ENCODE measurements at regions of chr20 and their contacts with region 1.

Region 1: DNA sequence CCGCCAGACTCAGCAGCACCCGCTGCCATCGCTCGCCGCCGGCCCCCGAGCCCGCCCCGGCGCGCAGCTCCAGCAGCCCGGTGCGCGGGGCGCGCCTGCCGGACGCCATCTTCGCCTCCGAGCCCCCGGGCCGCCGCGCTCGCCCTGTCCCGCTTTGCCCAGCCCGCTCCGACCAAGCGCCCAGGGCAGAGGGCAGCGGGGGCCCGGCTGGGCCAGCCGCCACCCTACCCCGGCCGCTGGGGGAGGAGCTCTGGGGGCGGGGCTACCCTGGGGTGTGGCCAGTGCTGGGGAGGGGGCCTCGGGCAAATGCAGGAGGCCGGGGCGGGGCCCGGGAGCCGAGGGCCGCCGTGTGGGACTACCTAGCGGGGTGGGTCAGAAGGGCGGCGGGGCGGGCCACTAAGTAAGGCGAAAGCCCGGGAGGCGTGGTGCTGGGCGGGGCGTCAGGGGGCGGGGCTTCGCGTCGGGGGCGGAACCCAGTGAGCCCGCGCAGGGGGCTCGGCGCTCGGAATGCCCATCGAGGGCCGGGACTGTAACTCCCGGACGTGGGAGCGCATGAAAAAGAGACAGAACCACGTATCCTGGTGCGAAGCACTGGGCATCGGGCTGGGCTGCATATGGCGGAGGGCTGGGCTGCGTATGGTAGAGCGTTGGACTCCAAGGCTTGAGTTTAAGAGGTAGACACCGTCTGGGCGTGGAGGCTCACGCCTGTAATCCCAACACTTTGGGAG is at the start of gene SNTA1:
- DNase-seq: no peak
- ATAC-seq: peak; percentile 96
- H3K4me3 ChIP-seq: peak within 1 kb of the TSS; percentile 43 to 70
- H3K27ac ChIP-seq: no peak within 1 kb of the TSS
- H3K4me1 ChIP-seq: no peaks in the 10 kb centered on the region
- H3K27me3 ChIP-seq: no peaks in the 10 kb centered on the region
- CTCF ChIP-seq: no peak
- total RNA-seq, gene SNTA1: 12.0 TPM

Region 2: DNA sequence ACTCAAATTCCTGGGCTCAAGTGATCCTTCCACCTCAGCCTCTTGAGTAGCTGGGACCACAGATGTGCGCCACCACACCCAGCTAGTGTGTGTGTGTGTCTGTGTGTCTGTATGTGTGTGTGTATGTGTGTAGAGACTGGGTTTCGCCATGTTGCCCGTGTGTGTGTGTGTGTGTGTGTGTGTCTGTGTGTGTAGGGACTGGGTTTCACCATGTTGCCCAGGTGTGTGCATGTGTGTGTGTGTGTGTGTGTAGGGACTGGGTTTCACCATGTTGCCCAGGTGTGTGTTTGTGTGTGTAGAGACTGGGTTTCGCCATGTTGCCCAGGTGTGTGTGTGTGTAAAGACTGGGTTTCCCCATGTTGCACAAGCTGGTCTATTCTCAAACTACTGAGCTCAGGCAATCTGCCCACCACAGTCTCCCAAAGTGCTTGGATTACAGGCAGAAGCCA is 70.7 kb before region 1 on chr20:
- CTCF ChIA-PET with region 1: no interaction called
- POLR2A ChIA-PET with region 1: interaction called, 14 read pairs
- in situ Hi-C with region 1: no loop called
- intact Hi-C with region 1: no loop called
- DNase-seq: no peak
- ATAC-seq: no peak
- H3K4me3 ChIP-seq: no peak overlapping the region
- H3K27ac ChIP-seq: peak overlapping the region; percentile 77
- H3K4me1 ChIP-seq: peaks cover 20% of the 10 kb centered on the region
- H3K27me3 ChIP-seq: no peaks in the 10 kb centered on the region
- CTCF ChIP-seq: no peak